ENCODE measurements at regions of chr6 and their contacts with region 1.

Region 1: DNA sequence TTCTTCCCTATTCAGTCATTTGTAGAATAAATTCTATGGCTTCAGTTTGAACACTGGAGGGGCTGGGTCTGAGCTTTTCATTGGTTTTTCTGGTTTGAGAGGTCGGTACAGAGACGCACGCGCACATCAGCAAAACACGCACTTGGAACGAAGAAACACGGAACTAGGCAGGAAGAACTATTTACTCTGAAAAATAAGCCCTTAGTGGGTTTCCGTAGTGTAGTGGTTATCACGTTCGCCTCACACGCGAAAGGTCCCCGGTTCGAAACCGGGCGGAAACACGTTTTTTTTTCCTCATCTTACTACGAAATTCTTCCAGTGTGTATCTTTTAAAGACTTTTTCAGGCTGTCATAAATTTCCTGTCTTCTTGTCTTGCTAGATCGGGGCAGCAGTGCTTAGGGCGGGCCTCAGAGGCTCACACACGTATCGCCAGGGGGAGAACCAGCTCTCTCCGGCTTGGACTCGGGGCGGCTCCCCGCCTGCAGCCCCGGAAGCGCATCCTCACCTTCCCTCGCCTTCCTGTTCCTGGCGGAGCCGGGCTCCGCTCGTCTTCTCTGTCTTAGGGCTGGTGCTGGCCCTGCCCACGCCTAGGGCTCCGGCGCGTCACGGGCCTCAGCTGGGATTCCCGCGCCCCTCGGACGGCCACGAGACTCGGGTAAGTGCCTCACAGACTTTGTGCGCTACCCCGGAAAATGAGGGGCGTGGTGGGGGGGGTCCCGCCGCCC is at the start of gene HMGN4:
- DNase-seq: peak; percentile 80 to 84
- H3K4me3 ChIP-seq: peak within 1 kb of the TSS; percentile 78
- H3K27ac ChIP-seq: peak within 1 kb of the TSS; percentile 78
- H3K4me1 ChIP-seq: peaks cover 18% of the 10 kb centered on the region
- H3K27me3 ChIP-seq: no peaks in the 10 kb centered on the region
- CTCF ChIP-seq: no peak
- total RNA-seq, gene HMGN4: 86.9 and 90.5 TPM in 2 replicates

Region 2: GRCh38 chr6:26312501-26313390 is 225.3 kb before region 1 on chr6:
- CTCF ChIA-PET with region 1: no interaction called
- POLR2A ChIA-PET with region 1: no interaction called
- intact Hi-C with region 1: loop called (anchors 5 kb)
- DNase-seq: peak; percentile 74 to 77
- H3K4me3 ChIP-seq: peak overlapping the region; percentile 69
- H3K27ac ChIP-seq: peak overlapping the region; percentile 74
- H3K4me1 ChIP-seq: peaks cover 13% of the 10 kb centered on the region
- H3K27me3 ChIP-seq: no peaks in the 10 kb centered on the region
- CTCF ChIP-seq: no peak

Region 3: DNA sequence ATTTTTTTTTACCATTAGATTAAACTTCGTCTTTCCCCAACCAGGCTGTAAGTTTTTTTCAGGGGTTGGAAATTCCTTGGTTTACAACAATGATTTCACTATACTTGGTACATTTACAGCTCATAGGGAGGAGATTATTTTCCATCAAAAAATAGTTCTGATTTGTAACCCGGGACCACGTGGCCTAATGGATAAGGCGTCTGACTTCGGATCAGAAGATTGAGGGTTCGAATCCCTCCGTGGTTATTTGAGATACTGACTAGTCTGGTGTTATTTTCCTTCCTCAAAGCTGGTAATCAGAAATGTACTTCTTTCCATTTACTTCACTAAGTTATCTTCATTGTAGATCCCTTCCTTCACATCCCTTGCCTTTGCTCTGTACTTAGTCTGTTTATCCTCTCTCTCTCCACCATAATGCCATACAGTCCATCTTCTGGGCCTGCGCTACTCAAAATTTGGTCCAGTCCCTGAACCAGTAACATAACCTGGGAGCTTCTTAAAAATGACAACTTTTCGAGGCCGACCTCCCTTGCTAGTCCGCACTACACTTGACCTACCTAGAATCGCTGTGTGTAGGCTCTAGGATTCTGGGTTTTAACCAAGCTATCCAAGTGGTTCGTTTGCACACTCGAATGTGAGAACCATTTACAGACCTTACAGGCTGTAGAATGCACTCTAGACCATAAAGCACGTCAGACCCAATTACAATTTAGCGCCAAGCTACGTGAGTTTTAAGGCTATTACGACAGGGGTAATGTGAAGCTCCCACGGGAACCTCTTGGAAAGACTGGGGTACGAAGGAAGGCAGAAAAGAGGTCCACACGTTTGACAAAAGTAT is 215.1 kb before region 1 on chr6:
- CTCF ChIA-PET with region 1: interaction called, 5 read pairs
- POLR2A ChIA-PET with region 1: no interaction called
- intact Hi-C with region 1: loop called (anchors 2 kb)
- DNase-seq: peak; percentile 77 to 88
- H3K4me3 ChIP-seq: peak overlapping the region; percentile 72
- H3K27ac ChIP-seq: peak overlapping the region; percentile 57
- H3K4me1 ChIP-seq: peaks cover 22% of the 10 kb centered on the region
- H3K27me3 ChIP-seq: no peaks in the 10 kb centered on the region
- CTCF ChIP-seq: no peak

Region 4: DNA sequence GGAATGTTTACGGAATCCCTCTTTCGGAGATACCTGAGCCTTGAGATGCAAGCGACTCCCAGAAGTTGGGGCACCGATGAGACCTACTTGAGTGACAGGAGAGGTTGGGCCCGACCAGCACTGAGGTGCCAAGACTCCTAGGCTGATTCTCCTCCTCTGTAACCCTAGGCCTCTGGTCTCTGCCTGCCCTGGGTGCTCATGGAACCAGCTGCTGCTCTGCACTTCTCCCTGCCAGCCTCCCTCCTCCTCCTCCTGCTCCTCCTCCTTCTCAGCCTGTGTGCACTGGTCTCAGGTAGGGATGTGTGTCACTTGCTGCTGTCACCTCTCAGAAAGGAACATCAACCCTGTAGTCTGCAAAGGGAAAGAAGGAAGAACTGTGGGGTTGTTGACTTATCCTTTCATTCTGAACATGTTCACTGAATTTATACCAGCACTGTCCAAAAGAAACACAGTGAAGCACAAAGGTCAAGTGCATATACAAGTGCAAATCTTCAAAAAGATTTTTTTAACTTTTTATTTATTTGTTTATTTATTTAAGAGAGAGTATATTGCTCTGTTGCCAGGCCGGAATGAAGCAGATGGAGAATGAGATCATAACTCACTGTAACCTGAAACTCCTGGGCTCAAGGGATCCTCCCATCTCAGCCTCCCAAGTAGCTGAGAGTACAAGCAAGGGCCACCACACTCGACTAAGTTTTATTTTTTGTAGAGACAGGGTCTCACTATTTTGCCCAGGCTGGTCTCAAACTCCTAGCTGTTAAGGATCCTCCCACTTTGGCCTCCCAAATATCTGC is 154.2 kb before region 1 on chr6:
- CTCF ChIA-PET with region 1: interaction called, 15 read pairs
- POLR2A ChIA-PET with region 1: no interaction called
- intact Hi-C with region 1: no loop called
- DNase-seq: peak; percentile 28 to 55
- H3K4me3 ChIP-seq: peak overlapping the region; percentile 65
- H3K27ac ChIP-seq: peak overlapping the region; percentile 59
- H3K4me1 ChIP-seq: peaks cover 19% of the 10 kb centered on the region
- H3K27me3 ChIP-seq: no peaks in the 10 kb centered on the region
- CTCF ChIP-seq: no peak

Region 5: DNA sequence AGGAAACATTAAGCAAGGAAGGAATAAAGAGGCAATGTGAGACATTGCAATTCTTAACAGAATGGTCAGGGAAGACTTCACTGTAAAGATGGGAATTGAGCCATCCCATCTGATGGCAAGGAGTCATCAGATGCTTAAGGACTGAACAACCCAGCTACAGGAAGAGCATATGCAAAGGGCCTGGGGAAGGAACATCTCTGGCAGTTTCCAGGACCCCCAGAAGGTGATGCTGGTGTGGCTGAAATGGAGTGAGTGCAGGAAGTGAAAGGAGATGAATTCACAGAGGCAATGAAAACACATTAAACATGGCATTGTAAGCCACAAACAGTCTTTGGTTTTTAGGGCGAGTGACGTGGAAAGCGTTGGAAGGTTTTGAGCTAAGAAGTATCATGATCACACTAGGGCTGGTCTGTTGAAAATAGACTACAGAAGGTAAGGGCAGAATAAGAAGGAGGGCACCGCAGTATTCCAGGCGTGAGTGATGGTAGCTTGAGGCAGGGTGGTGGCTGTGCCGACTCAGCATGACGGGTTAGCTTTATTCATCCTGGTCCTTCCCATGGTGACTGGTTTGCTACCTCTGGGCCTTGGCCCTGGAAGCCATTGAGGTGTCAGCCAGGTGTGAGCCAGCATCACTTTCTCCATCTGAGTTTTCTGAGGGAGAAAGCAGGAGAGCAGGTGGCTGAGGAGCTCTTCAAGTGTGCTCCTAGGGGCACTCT is 73.4 kb before region 1 on chr6:
- CTCF ChIA-PET with region 1: no interaction called
- POLR2A ChIA-PET with region 1: no interaction called
- intact Hi-C with region 1: no loop called
- DNase-seq: no peak
- H3K4me3 ChIP-seq: no peak overlapping the region
- H3K27ac ChIP-seq: no peak overlapping the region
- H3K4me1 ChIP-seq: no peaks in the 10 kb centered on the region
- H3K27me3 ChIP-seq: no peaks in the 10 kb centered on the region
- CTCF ChIP-seq: no peak

Region 6: GRCh38 chr6:26520853-26521599 is 17.0 kb before region 1 on chr6:
- CTCF ChIA-PET with region 1: no interaction called
- POLR2A ChIA-PET with region 1: interaction called, 8 read pairs
- intact Hi-C with region 1: loop called (anchors 1 kb)
- DNase-seq: peak; percentile 78 to 89
- H3K4me3 ChIP-seq: peak overlapping the region; percentile 85
- H3K27ac ChIP-seq: peak overlapping the region; percentile 93
- H3K4me1 ChIP-seq: peaks cover 29% of the 10 kb centered on the region
- H3K27me3 ChIP-seq: no peaks in the 10 kb centered on the region
- CTCF ChIP-seq: no peak

Region 7: DNA sequence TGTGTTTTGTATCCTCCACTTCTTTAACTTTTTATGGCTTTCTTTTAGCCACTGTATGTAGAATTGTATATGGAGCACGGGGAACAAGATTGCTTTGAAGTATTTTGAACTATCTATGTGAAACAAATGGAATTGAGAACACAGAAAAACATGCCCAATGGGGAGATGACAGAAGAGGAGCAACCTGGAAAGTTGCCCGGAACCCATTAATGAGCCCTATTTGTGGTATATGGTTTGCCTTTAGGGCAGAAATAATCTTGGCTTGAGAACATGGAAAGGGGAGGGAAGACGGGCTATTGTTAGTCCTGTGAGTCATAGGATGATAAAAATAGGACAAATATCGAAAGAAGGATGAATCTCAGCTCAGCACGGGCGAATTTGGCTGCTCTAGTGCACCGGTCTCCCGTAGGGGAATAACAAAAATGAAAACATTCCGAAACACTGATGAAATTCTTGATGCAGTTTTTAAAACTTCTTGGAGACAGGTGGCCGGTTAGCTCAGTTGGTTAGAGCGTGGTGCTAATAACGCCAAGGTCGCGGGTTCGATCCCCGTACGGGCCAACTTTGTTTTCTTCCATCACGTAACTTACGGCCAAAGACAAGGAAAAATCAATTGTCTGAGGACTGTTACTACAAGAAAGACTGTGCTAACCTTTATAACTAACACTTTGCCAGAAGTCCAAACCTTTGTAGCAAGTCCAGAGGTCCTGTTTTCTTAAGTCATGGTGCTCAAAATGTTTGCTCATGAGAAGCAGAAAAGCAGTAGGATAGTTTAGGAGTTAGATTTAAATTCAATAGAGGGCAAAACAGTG is 15.8 kb after region 1 on chr6:
- CTCF ChIA-PET with region 1: interaction called, 8 read pairs
- POLR2A ChIA-PET with region 1: interaction called, 5 read pairs
- intact Hi-C with region 1: loop called (anchors 1 kb)
- DNase-seq: peak; percentile 85 to 87
- H3K4me3 ChIP-seq: peak overlapping the region; percentile 69
- H3K27ac ChIP-seq: peak overlapping the region; percentile 60
- H3K4me1 ChIP-seq: peaks cover 31% of the 10 kb centered on the region
- H3K27me3 ChIP-seq: no peaks in the 10 kb centered on the region
- CTCF ChIP-seq: no peak

Region 8: GRCh38 chr6:26613689-26614683 is 76.0 kb after region 1 on chr6:
- CTCF ChIA-PET with region 1: no interaction called
- POLR2A ChIA-PET with region 1: no interaction called
- intact Hi-C with region 1: no loop called
- DNase-seq: no peak
- H3K4me3 ChIP-seq: no peak overlapping the region
- H3K27ac ChIP-seq: no peak overlapping the region
- H3K4me1 ChIP-seq: no peaks in the 10 kb centered on the region
- H3K27me3 ChIP-seq: no peaks in the 10 kb centered on the region
- CTCF ChIP-seq: no peak